Activated T-helper 2 cell treated with anti-CD3 and anti-CD28 coated beads, Interferon-gamma antibody, Interleukin-2, Interleukin-4, amounts not matched to agents 10 μg/mL and 5 μg/mL and 100 μg/mL, durations not matched to agents 14 hours and 24 hours and 36 hours (primary cell): ENCODE measurements at regions of chr12 and their contacts with region 1.

Region 1: DNA sequence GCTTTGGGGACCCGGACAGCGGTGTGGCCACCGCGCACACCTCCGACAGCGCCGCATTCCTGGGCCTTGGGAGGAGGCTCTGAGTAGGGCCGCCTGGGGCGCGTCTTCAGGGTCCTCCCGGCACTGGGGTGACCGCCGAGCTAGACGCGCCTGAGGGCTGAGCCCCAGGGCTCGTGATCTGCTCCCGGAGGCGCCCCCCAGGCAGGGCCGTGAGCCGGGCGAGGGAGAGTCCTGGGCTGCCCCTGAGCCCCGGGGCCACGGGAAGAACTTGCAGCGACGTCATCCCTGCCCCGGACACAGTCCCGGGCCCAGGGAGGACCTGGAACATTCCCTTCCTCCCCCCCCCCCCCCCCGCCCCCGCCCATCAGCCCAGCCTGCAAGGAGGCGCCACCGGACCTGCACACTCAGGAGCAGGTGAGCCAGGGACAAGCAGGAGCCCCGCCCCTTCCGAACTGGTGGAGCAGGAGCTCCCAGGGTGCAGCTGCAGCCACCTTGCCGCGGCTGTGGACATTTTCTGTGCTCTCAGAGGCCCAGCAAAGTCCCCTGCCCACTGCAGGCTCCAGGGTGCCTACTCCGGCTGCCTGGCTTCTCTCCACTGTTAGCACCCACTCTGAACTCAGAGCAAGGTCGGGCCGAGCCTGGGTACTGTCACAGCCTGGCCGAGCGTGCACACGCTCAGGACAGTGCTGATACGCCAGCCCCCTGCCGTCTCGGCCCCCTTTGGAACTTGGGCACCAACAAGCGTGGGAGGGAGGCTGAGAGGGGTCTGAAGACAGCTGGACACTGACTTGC is 50.7 kb downstream of the A2M start:
- DNase-seq: no peak
- H3K4me3 Mint-ChIP-seq: peak overlapping the region; percentile 17
- H3K27ac Mint-ChIP-seq: no peak overlapping the region
- H3K4me1 Mint-ChIP-seq: peaks cover 3% of the 10 kb centered on the region
- H3K27me3 Mint-ChIP-seq: peaks cover 27% of the 10 kb centered on the region

Region 2: GRCh38 chr12:9319044-9319841 is 254.2 kb after region 1 on chr12:
- intact Hi-C with region 1: loop called (anchors 5 kb)
- DNase-seq: no peak
- H3K4me3 Mint-ChIP-seq: no peak overlapping the region
- H3K27ac Mint-ChIP-seq: no peak overlapping the region
- H3K4me1 Mint-ChIP-seq: peaks cover 2% of the 10 kb centered on the region
- H3K27me3 Mint-ChIP-seq: no peaks in the 10 kb centered on the region